ENCODE measurements at regions of chr2 and their contacts with region 1.

Region 1: DNA sequence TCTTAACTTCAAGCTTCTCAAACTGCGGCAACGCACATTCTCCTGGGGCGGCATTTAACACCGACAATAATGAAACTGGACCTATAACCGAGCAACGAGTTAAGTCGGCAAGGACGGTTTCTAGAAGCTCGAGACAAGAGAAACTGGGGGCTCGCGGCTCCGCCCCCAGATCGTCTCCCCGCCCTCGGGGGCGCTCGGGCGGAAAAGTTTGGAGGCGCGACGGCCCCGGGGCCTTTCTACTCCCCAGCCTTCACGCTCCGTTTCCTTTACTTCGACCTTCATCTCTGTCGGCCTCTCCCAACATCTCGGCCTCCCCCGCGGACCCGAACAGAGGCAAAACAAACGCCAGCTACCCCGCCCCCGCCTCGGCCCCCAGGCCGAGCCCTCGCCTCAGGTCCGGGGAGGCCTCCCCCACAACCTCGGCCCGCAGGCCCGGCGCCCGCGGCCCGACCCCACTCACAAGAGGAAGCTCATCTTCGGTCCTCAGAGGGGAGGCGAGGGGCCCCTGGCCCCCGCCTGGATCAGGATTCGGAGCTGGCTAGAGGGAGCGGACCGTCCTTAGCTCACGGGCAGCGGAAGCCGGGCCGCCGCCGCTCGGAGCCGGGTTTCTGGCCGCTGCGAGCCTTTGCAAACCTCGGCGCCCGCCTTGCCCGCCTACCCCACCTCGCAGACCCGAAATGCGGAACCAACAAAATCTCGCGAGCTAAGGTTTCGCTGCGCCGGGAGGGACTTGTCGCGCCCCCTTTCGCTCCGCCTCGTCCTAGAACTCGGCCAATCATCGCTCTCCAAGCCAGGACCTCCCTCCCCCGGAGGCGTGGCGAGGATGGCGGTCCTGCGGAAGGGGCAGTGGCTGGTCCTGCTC is at the start of gene MOB1A:
- DNase-seq: peak; percentile 93
- ATAC-seq: peak; percentile 83
- H3K4me3 Mint-ChIP-seq: peak within 1 kb of the TSS; percentile 93
- H3K27ac Mint-ChIP-seq: peak within 1 kb of the TSS; percentile 98
- H3K4me1 Mint-ChIP-seq: peaks cover 60% of the 10 kb centered on the region
- H3K27me3 Mint-ChIP-seq: no peaks in the 10 kb centered on the region
- CTCF ChIP-seq: no peak
- total RNA-seq, gene MOB1A: 314 and 318 TPM in 2 replicates

Region 2: DNA sequence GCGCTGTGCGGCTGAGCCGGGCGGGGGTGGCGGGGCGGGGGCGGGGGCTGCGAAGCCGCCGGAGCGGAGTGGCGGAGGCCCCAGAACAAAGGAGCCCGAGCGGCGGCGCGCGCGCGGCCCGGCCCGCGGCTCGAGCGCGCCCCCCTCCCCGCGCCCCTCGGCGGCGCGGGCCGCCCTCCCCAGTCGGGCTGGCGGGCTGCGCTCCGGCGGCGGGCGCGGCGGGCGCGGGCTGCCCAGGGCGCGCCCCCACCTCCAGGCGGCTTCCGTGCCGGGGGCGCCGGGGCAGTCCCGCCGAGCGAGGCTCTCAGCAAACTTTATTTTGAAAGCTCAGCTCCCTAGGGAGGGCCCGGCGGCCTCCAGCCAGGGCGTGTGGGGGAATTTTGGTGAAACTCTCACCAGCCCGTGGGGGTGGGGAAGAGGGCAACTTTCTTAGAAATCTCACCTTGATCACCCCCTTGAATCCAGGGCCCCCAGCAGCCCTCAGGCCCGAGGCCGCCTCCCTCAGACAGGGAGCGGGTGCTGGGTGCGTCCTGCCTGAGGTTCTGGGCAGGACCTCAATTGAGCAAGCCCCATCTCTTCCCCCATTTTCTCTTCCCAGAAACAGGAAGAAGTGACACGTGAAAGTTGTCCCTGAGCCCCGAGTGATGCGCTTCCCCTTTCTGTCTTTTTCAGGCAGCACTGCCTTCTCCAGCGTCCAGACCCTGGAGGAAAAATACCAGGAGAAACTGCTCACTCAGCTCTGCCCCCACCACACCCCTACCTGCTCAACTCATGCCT is 192.9 kb before region 1 on chr2:
- CTCF ChIA-PET with region 1: no interaction called
- POLR2A ChIA-PET with region 1: interaction called, 7 read pairs
- intact Hi-C with region 1: loop called (anchors 1 kb)
- DNase-seq: peak; percentile 81
- ATAC-seq: peak; percentile 72
- H3K4me3 Mint-ChIP-seq: peak overlapping the region; percentile 90
- H3K27ac Mint-ChIP-seq: peak overlapping the region; percentile 89
- H3K4me1 Mint-ChIP-seq: peaks cover 82% of the 10 kb centered on the region
- H3K27me3 Mint-ChIP-seq: no peaks in the 10 kb centered on the region
- CTCF ChIP-seq: no peak

Region 3: GRCh38 chr2:74147727-74148456 is 30.5 kb before region 1 on chr2 and contains the start of gene BOLA3:
- CTCF ChIA-PET with region 1: interaction called, 8 read pairs
- POLR2A ChIA-PET with region 1: interaction called, 32 read pairs
- intact Hi-C with region 1: no loop called
- DNase-seq: peak; percentile 86
- ATAC-seq: peak; percentile 97
- H3K4me3 Mint-ChIP-seq: no peak within 1 kb of the TSS
- H3K27ac Mint-ChIP-seq: no peak within 1 kb of the TSS
- H3K4me1 Mint-ChIP-seq: peaks cover 7% of the 10 kb centered on the region
- H3K27me3 Mint-ChIP-seq: no peaks in the 10 kb centered on the region
- CTCF ChIP-seq: no peak
- total RNA-seq, gene BOLA3: 18.8 and 19.1 TPM in 2 replicates

Region 4: GRCh38 chr2:74191596-74192380 is 13.4 kb after region 1 on chr2:
- CTCF ChIA-PET with region 1: interaction called, 45 read pairs
- POLR2A ChIA-PET with region 1: interaction called, 723 read pairs
- intact Hi-C with region 1: no loop called
- DNase-seq: no peak
- ATAC-seq: no peak
- H3K4me3 Mint-ChIP-seq: no peak overlapping the region
- H3K27ac Mint-ChIP-seq: no peak overlapping the region
- H3K4me1 Mint-ChIP-seq: peaks cover 7% of the 10 kb centered on the region
- H3K27me3 Mint-ChIP-seq: no peaks in the 10 kb centered on the region
- CTCF ChIP-seq: no peak

Region 5: DNA sequence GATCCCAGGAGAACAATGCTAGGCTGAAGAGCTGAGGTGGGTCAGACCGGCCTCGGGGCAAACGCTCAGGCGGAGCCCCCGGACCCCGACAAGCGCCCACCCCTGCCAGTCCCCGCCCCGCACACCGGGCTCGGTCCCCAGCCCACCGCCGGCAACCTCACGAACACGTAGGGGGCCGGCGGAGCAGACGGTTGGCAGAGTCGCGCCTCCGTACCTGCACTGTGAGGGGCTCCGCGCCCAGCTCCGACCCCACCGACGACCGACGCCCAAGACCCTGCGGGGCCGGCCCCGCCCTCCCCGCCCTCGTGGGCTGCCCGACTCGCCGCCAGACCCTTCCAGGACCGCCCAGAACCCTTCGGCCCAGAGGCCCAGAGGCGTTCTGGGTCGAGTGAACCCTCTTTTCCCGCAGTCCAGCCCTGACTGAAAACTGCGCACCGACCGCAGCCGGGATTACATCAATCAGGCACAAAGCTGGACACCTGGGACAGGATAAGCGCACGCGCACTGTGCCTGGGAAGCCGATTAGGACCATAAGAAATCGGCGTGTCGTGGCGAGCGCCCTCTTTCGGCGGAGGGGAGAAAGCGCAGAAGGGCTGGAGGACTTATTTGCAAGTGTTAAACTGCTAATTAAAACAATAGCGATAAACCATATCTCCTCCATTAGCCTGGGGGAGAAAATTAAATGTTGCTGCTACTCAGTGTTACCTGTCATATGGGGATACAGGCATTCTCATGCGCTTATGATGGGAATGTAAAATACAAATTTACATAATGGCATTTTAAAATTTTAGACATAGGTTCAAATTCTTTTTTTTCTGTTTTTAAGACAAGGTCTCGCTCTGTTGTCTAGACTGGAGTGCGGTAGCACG is 213.4 kb after region 1 on chr2:
- CTCF ChIA-PET with region 1: no interaction called
- POLR2A ChIA-PET with region 1: interaction called, 12 read pairs
- intact Hi-C with region 1: no loop called
- DNase-seq: peak; percentile 94
- ATAC-seq: peak; percentile 89
- H3K4me3 Mint-ChIP-seq: peak overlapping the region; percentile 96
- H3K27ac Mint-ChIP-seq: peak overlapping the region; percentile 99
- H3K4me1 Mint-ChIP-seq: peaks cover 6% of the 10 kb centered on the region
- H3K27me3 Mint-ChIP-seq: peaks cover 4% of the 10 kb centered on the region
- CTCF ChIP-seq: peak; percentile 93